ENCODE measurements at regions of chr15 and their contacts with region 1.

Region 1: GRCh38 chr15:77024271-77025082 is 29.6 kb downstream of the PSTPIP1 start:
- DNase-seq: peak; percentile 50
- H3K4me3 Mint-ChIP-seq: no peak overlapping the region
- H3K27ac Mint-ChIP-seq: peak overlapping the region; percentile 80
- H3K4me1 Mint-ChIP-seq: peaks cover 50% of the 10 kb centered on the region
- H3K27me3 Mint-ChIP-seq: no peaks in the 10 kb centered on the region

Region 2: DNA sequence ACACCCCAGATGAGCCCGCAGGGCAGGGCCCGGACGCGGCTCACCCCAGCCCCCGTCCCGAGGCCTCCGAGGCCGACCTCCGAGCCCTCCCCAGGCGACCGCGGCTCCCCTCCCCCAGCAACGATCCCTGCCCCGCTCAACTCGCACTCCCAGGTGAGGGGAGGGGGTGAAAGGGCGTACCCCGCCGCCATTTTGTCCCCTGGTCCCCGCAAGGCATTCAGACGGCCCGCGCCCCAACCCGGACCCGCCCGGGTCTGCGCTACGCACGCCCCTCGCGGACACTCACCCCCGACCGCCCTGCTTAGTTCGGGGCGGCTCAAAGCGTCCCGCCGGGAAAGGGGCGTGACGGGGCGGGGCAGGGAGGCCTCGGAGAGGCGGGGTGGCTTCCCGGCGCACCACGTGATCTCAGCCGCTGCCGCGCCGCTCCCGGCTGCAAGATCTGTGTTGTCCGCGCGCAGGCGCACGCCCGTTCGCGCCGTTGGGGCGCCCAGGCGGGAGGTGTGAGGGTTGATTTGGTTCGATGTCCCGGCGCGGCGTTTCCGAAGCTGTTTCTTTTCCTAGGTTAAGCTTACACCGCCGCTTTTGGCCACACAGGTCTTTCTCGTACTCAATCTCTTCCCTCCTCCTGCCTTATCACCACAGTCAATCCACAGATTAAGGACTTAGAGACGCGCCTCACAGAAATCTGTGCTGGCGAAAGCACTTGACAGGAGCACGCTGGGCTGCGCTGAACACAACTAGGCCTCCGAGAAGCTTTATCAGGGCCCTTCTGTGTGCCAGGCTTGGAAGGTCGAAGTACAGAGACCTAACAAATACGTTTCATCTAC is 119.3 kb before region 1 on chr15 and contains the start of gene SCAPER:
- intact Hi-C with region 1: loop called (anchors 10 kb)
- DNase-seq: peak; percentile 86
- H3K4me3 Mint-ChIP-seq: peak within 1 kb of the TSS; percentile 89
- H3K27ac Mint-ChIP-seq: peak within 1 kb of the TSS; percentile 90
- H3K4me1 Mint-ChIP-seq: peaks cover 25% of the 10 kb centered on the region
- H3K27me3 Mint-ChIP-seq: peaks cover 5% of the 10 kb centered on the region
- total RNA-seq, gene SCAPER: 22.8 and 24.7 TPM in 2 replicates

Region 3: DNA sequence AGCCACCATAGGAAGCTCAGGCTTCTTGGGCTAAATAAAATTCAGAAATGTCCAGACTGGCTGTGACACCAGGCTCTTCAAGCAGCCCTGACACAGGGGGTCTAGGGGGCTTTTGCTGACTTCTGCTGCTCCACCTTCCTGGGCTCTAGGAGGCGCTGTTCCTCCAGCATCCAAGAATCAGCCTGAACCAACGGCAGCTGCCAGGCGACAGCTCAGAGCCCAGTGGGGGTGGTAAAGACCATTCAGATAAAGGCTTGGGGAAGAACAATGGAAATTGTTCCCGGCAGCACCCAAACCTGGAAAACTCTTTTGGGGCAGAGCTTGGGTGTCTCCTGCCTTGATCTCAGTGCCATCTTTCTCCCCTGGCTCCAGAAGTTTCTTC is 51.1 kb before region 1 on chr15:
- intact Hi-C with region 1: loop called (anchors 1 kb)
- DNase-seq: no peak
- H3K4me3 Mint-ChIP-seq: no peak overlapping the region
- H3K27ac Mint-ChIP-seq: peak overlapping the region; percentile 42
- H3K4me1 Mint-ChIP-seq: peaks cover 32% of the 10 kb centered on the region
- H3K27me3 Mint-ChIP-seq: peaks cover 7% of the 10 kb centered on the region

Region 4: DNA sequence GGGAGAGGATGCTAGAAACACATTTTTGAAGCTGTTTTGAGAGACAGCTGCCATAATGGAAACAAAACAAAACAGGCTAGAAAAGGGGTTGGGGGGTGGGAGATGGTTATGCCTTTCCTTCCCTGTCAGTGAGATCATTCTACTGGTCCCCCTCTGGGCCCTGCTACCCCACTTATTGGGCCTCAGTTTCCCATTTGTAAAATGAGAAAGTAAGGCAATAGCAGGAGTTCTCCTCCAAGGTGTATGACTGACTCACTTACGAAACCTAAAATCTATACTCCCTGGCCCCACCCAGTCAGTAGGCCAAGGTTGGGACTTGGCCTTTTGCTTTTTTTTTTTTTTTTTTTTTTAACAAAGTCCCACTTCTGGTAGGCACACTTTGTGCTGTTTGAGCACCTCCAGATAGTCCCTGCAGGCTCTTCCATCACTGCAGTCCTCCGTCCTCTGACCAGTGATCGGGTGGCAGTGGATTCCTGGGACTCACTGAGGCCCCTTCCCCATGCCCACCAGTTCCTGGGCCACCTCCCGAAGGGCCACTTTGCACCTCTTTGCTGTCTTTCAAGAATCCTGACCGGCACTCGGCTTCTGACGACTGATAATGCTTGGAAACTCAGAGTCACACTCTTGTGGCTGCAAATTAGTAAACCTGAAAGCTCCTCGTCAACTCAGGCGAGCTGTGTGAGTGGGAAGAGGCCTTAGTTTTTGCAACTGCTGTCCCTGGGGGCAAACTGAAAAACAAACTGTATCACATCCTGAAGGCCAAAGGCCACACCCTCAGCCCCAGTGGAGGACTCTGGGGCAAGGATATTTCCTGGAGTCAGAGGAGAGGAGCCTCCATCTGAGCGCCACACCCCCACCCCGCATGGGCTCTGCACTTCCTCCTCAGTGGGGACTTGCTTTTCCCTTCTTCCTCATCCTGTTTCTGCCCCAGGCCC is 36.3 kb before region 1 on chr15:
- intact Hi-C with region 1: loop called (anchors 1 kb)
- DNase-seq: peak; percentile 76
- H3K4me3 Mint-ChIP-seq: peak overlapping the region; percentile 58
- H3K27ac Mint-ChIP-seq: peak overlapping the region; percentile 99
- H3K4me1 Mint-ChIP-seq: peaks cover 62% of the 10 kb centered on the region
- H3K27me3 Mint-ChIP-seq: no peaks in the 10 kb centered on the region

Region 5: DNA sequence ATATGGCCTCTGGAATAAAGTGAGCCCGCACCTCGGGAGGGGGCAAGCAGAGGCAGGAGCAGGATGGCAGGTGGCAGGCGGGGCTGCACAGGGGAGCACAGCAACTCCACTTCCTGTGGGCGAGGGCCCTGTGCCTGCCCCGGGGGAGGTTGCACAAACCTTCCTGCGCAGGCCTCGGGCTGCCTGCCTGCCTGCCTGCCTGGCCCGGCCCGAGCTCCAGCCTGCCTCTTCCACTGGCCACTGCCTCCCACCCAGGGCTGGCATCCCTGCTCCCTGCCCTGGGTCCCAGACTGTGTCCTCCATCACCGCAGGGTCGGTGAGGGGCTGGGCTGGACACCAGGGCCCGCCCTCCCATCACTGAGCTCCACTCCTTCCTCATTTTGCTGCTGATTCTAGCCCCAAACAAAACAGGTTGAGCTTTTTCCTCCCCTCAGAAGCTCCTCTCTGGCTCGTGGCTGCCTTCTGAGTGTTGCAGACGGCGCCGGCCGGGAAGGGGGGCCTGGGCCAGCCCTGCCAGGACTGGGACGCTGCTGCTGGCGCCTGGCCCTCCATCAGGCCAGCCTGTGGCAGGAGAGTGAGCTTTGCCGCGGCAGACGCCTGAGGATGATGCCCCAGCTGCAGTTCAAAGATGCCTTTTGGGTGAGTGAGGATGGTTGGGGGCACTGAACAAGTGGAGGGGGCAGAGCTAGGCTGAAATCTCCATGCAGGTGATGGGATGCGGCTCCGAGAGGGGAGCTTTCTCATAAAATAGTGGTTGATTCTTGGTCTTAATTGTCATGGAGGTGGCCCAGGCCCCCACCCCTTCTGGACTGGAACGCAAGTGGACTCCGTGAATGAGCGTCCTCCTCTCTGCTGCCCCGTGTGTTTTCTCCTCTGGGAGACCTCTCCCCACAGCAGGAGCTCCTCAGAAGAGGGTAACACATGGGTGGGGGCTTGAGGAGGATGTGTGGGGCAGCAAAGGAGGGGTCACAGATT is 29.2 kb before region 1 on chr15 and contains the start of gene PSTPIP1:
- intact Hi-C with region 1: loop called (anchors 1 kb)
- DNase-seq: peak; percentile 61
- H3K4me3 Mint-ChIP-seq: peak within 1 kb of the TSS; percentile 92
- H3K27ac Mint-ChIP-seq: peak within 1 kb of the TSS; percentile 90
- H3K4me1 Mint-ChIP-seq: peaks cover 63% of the 10 kb centered on the region
- H3K27me3 Mint-ChIP-seq: no peaks in the 10 kb centered on the region
- total RNA-seq, gene PSTPIP1: 167 and 169 TPM in 2 replicates

Region 6: DNA sequence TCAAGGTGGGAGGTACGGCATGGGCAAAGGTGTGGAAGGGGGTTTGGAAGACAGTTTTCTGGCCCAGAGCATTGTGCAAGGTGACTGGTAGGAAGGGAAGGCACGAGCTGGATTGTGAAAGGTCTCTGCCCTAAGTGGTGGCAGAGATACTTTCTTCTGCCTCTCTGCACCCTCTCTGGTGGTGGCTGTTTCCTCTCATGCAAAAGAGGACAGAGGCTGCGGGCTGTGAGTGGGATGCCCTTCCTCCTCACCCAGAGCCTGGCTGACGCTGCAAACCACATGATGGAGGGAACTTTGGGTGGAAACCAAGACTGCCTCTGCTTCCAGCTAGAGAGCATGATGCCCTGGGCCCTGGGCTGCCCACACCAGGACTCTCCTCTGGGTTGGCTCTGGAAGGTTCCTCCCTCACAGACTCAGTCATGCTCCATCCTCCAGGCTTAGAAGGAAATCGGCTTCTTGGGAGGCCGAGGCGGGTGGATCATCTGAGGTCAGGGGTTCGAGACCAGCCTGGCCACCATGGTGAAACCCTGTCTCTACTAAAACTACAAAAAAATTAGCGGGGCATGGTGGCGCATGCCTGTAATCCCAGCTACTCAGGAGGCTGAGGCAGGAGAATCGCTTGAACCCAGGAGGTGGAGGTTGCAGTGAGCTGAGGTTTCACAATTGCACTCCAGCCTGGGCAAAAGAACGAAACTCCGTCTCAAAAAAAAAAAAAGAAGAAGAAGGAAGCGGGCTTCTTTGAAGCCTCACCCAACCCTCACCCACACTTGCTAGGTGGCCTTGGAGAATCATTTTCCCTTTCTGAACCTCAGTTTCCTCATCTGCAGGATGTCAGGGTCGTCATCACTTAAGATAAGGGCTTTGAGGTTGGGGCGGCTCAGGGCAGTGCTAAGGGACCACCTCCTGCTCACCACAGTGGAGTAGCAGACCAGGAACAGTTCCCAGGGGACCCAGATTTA is 21.2 kb before region 1 on chr15:
- intact Hi-C with region 1: loop called (anchors 2 kb)
- DNase-seq: peak; percentile 67
- H3K4me3 Mint-ChIP-seq: peak overlapping the region; percentile 66
- H3K27ac Mint-ChIP-seq: peak overlapping the region; percentile 92
- H3K4me1 Mint-ChIP-seq: peaks cover 66% of the 10 kb centered on the region
- H3K27me3 Mint-ChIP-seq: no peaks in the 10 kb centered on the region

Region 7: DNA sequence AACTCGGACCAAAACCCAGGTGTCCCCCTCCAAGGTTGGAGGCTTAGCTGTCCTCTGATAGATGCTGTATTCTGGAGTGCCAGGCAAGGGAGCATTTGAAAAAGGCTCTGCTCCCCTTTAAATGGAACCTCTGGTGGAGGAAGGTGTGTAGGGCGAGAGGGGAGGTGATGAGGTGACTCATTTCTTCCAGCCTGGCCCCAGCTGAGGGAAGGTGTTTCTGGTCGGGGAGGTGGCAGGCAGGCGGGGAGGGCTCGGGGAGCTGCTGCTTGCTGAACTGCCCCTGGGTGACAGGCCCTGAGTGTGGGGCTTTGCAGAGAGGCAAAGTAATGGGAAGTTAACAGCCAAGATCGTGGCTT is 10.7 kb before region 1 on chr15:
- intact Hi-C with region 1: loop called (anchors 1 kb)
- DNase-seq: peak; percentile 80
- H3K4me3 Mint-ChIP-seq: peak overlapping the region; percentile 39
- H3K27ac Mint-ChIP-seq: peak overlapping the region; percentile 84
- H3K4me1 Mint-ChIP-seq: peaks cover 70% of the 10 kb centered on the region
- H3K27me3 Mint-ChIP-seq: no peaks in the 10 kb centered on the region

Region 8: DNA sequence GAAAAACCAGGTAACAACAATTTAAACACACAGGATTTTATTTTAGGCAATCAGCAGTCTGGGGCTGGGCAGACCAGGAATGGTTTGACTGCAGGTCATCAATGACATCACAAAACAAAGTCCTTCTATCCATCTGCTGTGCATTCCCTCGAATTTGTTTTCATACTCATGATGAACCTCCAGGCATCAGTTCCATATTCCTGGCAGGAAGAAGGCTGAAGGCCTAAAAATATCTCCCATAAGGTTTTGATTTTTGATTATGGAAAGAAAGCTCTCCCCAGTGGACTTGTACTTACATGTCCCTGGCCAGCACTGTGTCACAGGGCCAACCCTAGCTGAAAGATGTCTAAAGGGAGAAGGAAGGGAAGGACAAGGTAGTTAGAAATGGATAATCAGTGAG is 288.0 kb after region 1 on chr15:
- intact Hi-C with region 1: no loop called
- DNase-seq: no peak
- H3K4me3 Mint-ChIP-seq: no peak overlapping the region
- H3K27ac Mint-ChIP-seq: no peak overlapping the region
- H3K4me1 Mint-ChIP-seq: peaks cover 5% of the 10 kb centered on the region
- H3K27me3 Mint-ChIP-seq: peaks cover 8% of the 10 kb centered on the region